ENCODE measurements at regions of chr9 and their contacts with region 1.

Region 1: GRCh38 chr9:68941780-68942459 is 72.0 kb downstream of the PRKACG start:
- DNase-seq: no peak
- H3K4me3 ChIP-seq: no peak overlapping the region
- H3K27ac ChIP-seq: no peak overlapping the region
- H3K4me1 ChIP-seq: no peaks in the 10 kb centered on the region
- H3K27me3 ChIP-seq: no peaks in the 10 kb centered on the region
- CTCF ChIP-seq: no peak

Region 2: DNA sequence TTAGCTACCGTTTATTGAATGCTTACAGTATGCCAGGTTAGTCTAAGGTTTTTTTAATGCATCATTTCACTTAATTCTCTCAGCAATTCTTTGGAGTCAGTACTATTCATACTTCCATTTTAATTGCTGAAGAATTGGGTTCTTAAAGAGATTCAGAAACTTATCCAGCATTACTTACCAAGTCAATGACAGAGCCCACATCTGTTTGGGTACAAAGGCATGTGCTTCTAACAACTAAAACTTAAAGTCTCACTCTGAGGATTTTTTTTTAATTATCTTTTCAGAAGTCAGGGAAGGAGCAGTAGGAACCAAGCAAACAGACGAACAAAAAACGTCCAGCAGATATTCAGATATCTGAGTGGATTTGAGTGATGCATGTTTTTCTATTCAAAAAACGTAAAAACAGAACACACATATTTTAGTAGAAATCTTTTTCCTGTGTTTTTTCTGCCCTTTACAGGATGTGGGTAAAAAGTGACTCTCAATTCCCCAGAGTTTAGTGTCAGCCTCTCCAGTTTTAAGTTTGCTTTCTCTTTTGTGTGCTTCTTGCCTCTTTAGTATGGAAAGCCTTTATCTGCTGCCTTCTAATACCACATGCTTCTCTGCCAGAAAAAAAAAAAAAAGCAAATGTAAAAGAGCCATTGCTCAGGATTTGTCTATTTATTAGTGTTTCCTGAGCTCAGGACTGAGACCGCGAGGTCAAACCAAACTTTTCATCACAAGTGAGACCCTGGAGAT is 46.0 kb before region 1 on chr9:
- CTCF ChIA-PET with region 1: no interaction called
- dilution Hi-C with region 1: no loop called
- in situ Hi-C with region 1: no loop called
- intact Hi-C with region 1: no loop called
- DNase-seq: no peak
- H3K4me3 ChIP-seq: no peak overlapping the region
- H3K27ac ChIP-seq: no peak overlapping the region
- H3K4me1 ChIP-seq: no peaks in the 10 kb centered on the region
- H3K27me3 ChIP-seq: no peaks in the 10 kb centered on the region
- CTCF ChIP-seq: no peak

Region 3: DNA sequence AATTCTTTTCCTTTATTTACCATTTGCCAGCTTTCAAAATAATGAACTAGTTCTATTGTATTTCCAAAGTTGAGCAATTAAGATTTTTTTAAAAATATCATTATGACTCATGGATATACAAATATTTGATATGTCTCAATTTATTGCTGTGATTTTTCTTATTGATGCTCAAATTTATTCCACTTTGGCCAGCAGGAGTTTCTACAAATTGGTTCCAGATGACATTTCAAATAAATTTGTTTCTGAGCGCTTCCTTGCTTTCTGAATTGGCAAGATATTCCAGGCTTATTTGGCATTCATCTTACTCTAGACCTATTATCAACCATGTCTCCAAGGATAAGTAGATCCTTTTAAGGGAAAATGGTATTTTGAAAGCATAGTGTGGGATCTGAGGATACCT is 173.7 kb after region 1 on chr9:
- CTCF ChIA-PET with region 1: interaction called, 11 read pairs
- dilution Hi-C with region 1: no loop called
- in situ Hi-C with region 1: no loop called
- intact Hi-C with region 1: no loop called
- DNase-seq: no peak
- H3K4me3 ChIP-seq: no peak overlapping the region
- H3K27ac ChIP-seq: no peak overlapping the region
- H3K4me1 ChIP-seq: peaks cover 5% of the 10 kb centered on the region
- H3K27me3 ChIP-seq: no peaks in the 10 kb centered on the region
- CTCF ChIP-seq: no peak